Activated naive CD4-positive, alpha-beta T cell treated with anti-CD3 and anti-CD28 coated beads for 36 hours (primary cell): ENCODE measurements at regions of chr2 and their contacts with region 1.

Region 1: DNA sequence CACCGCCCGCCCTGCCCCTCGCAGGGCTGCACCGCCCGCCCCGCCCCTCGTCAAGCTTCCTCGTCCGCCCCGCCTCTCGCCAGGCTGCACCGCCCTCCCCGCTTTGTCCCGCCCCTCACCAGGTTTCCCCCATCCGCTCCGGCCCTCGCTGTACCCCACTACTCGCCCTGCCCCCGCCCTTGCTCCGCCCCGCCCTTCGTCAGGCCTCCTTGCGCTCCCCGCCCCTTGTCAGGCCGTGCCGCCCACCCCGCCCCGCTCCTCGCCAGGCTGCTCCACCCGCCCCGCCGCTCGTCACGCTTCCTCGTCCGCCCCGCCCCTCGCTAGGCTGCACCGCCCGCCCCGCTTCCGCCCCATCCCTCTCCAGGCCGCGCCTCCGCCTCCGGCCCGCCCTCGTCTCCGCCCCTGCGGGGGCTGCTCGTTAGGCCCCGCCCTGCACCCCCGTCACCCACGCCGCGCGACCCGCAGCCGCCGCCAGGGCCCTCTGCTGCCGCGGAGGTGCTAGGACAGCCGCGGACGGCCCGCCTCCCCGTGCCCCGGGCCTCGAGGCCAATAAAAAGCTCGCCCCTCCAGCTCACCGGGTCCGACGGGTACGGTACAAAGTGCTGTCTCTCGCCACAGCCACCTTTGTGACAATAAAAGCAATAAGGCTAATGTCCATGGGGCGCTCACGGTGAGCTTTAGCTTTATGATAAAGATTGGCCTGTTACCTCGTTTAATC is 574 bp upstream of the DNPEP start:
- DNase-seq: peak; percentile 98
- H3K4me3 Mint-ChIP-seq: peak overlapping the region; percentile 90
- H3K27ac Mint-ChIP-seq: peak overlapping the region; percentile 59
- H3K4me1 Mint-ChIP-seq: peaks cover 23% of the 10 kb centered on the region
- H3K27me3 Mint-ChIP-seq: no peaks in the 10 kb centered on the region

Region 2: GRCh38 chr2:218568190-218569037 is 819.9 kb before region 1 on chr2 and contains the starts of genes CNOT9 and USP37:
- CTCF ChIA-PET with region 1: no interaction called
- intact Hi-C with region 1: loop called (anchors 5 kb)
- DNase-seq: peak; percentile 100
- H3K4me3 Mint-ChIP-seq: peak within 1 kb of the TSS; percentile 91
- H3K27ac Mint-ChIP-seq: peak within 1 kb of the TSS; percentile 100
- H3K4me1 Mint-ChIP-seq: peaks cover 60% of the 10 kb centered on the region
- H3K27me3 Mint-ChIP-seq: no peaks in the 10 kb centered on the region
- total RNA-seq, gene CNOT9: 74.3 to 78.6 TPM
- total RNA-seq, gene USP37: 21.7 to 23.2 TPM

Region 3: DNA sequence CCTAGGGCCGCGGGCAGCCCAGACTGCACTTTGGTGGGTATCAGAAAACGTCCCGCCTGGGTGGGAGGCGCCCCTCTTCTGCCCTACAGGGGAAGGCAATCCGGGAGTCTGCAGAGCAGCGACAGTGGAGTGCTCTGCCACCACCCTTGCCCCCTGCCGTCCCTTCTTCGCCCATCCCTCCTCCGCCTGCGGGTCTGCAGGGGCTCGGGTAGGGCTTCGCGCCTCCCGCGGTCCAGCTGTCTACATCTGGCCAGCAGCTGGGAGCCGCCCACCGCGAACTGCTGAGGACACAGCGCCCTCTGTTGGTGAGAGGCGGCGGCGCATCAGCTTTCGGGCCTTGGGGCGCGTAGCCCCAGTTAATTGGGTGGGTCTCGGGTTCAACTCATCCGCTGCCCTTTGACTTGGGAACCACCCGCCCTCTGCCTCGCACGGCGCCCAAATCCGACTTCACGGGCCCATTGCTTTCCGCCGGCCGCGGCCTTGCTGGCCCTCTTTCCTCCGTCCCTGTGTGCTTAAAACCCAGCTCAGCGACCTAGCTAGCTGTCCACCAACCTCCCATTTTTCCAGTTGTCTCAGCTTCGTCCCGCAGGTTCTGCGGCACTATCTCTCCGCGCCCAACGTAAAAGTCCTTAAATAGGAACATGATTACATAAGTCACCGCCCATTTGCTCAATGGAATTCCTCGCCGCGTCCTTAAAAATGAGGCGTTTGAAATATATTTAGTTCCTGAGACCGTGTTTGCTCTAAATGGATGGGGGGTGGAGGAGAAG is 490.0 kb before region 1 on chr2:
- CTCF ChIA-PET with region 1: no interaction called
- intact Hi-C with region 1: loop called (anchors 1 kb)
- DNase-seq: peak; percentile 82
- H3K4me3 Mint-ChIP-seq: peak overlapping the region; percentile 45
- H3K27ac Mint-ChIP-seq: no peak overlapping the region
- H3K4me1 Mint-ChIP-seq: peaks cover 42% of the 10 kb centered on the region
- H3K27me3 Mint-ChIP-seq: peaks cover 27% of the 10 kb centered on the region

Region 4: DNA sequence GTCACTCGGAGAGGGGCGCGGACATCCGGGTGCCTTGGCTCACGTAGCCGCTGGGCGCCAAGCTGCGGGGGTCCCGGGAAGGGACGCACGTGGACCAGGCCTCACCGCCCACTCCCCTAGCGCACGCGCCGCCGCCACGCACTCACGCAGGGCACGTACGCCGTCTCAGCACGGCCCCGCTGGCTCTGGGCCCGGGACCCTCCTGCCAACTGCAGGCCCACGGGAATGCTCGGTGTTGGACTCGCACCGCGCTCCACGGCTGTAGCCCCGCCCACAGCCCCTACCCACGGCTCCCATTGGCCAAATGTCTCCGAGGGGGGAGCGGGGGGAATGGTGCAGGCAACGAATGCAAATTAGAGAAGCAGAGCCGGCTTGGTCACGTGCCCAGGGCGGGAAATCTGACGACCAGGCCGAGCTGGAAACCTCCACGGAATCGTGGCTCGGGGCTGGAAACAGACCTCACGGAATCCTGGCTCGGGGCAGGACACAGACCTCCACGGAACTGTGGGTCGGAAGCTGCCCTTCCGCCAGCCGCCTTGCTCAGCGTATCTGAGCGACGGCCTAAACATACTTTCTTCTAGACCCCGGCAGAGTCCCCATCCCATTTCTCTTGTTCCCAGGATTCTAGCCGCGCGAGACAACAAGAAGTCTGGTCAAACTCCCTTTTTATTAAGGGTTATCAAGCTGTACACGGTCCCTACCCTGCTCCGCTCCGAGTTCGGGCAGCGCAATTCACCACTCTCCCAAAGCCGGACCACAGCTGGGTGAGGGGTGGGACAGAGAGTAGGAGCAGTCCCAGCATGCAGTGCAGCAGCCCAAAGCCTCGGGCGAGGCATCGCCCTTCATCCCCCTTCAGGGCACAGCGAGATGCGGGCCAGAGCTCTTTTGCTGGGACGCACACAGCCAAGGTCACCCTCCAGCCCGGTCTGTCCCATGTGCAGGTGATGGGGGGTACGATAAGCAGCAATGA is 169.3 kb before region 1 on chr2 and contains the start of gene ABCB6:
- CTCF ChIA-PET with region 1: no interaction called
- intact Hi-C with region 1: loop called (anchors 2 kb)
- DNase-seq: peak; percentile 89
- H3K4me3 Mint-ChIP-seq: peak within 1 kb of the TSS; percentile 78
- H3K27ac Mint-ChIP-seq: peak within 1 kb of the TSS; percentile 56
- H3K4me1 Mint-ChIP-seq: peaks cover 25% of the 10 kb centered on the region
- H3K27me3 Mint-ChIP-seq: no peaks in the 10 kb centered on the region
- total RNA-seq, gene ABCB6: 7.0 to 7.5 TPM

Region 5: GRCh38 chr2:219294356-219295351 is 93.6 kb before region 1 on chr2:
- CTCF ChIA-PET with region 1: interaction called, 7 read pairs
- intact Hi-C with region 1: loop called (anchors 1 kb)
- DNase-seq: peak; percentile 89
- H3K4me3 Mint-ChIP-seq: peak overlapping the region; percentile 77
- H3K27ac Mint-ChIP-seq: no peak overlapping the region
- H3K4me1 Mint-ChIP-seq: peaks cover 20% of the 10 kb centered on the region
- H3K27me3 Mint-ChIP-seq: peaks cover 3% of the 10 kb centered on the region

Region 6: GRCh38 chr2:219484343-219485200 is 96.3 kb after region 1 on chr2:
- CTCF ChIA-PET with region 1: no interaction called
- intact Hi-C with region 1: no loop called
- DNase-seq: no peak
- H3K4me3 Mint-ChIP-seq: peak overlapping the region; percentile 27
- H3K27ac Mint-ChIP-seq: no peak overlapping the region
- H3K4me1 Mint-ChIP-seq: peaks cover 4% of the 10 kb centered on the region
- H3K27me3 Mint-ChIP-seq: peaks cover 37% of the 10 kb centered on the region

Region 7: DNA sequence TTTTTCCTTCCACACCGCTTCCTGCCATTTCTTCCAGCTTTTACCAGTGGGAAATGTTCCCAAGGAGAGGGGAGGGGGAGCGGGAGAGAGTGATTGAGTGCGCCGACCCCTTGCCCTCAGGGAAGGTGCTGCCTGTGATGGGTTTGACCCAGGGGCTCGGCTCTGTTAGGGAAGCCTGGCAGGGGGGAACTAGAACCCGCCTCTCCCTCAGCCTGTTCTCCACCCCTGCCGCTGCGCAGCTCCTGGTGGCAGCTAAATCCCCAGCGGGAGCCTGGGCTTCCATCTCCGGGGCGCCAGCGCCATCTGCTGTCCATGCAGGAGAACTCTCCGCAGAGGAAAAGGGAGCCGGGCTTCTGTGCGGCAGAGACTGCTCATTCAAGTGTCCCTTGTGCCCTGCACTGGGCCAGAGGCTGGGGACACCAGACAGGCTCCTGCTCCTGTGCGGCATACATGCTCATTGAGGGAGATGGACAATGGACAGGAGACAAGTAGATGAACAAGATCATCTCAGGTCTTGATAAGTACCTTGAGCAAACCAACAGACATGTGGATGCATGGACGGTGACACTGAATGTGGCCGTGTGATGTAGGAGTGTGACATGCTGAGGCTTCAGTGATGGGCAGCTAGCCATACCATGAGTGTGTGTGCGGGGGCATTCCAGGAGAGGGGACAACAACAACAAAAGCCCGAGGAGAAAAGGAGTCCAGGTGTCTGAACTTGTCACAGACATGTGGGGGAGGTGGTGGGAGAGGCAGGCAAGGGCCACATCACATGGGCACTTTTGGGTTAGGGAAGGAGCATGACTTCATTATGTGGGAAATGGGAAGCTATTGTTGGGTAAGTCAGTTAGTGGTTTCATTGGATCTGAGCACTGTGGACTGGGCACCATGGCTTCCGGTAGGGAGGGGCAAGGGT is 142.0 kb after region 1 on chr2:
- CTCF ChIA-PET with region 1: interaction called, 11 read pairs
- intact Hi-C with region 1: no loop called
- DNase-seq: peak; percentile 90
- H3K4me3 Mint-ChIP-seq: no peak overlapping the region
- H3K27ac Mint-ChIP-seq: no peak overlapping the region
- H3K4me1 Mint-ChIP-seq: no peaks in the 10 kb centered on the region
- H3K27me3 Mint-ChIP-seq: peaks cover 52% of the 10 kb centered on the region